ENCODE measurements at regions of chr1 and their contacts with region 1.

Region 1: GRCh38 chr1:32072622-32073298 is at the start of gene TMEM39B:
- DNase-seq: peak; percentile 95
- ATAC-seq: peak; percentile 87
- H3K4me3 ChIP-seq: peak within 1 kb of the TSS; percentile 84
- H3K27ac ChIP-seq: peak within 1 kb of the TSS; percentile 95
- H3K4me1 ChIP-seq: peaks cover 10% of the 10 kb centered on the region
- H3K27me3 ChIP-seq: no peaks in the 10 kb centered on the region
- CTCF ChIP-seq: no peak
- POLR2A ChIP-seq: peak; percentile 52
- RAD21 ChIP-seq: no peak
- total RNA-seq, gene TMEM39B: 4.4 and 6.5 TPM in 2 replicates

Region 2: GRCh38 chr1:31637915-31638673 is 434.7 kb before region 1 on chr1:
- CTCF ChIA-PET with region 1: no interaction called
- POLR2A ChIA-PET with region 1: interaction called, 12 read pairs
- dilution Hi-C with region 1: no loop called
- in situ Hi-C with region 1: no loop called
- intact Hi-C with region 1: no loop called
- DNase-seq: no peak
- ATAC-seq: no peak
- H3K4me3 ChIP-seq: no peak overlapping the region
- H3K27ac ChIP-seq: no peak overlapping the region
- H3K4me1 ChIP-seq: peaks cover 12% of the 10 kb centered on the region; the same call in 1 of the 2 replicates
- H3K27me3 ChIP-seq: no peaks in the 10 kb centered on the region
- CTCF ChIP-seq: no peak
- POLR2A ChIP-seq: no peak
- RAD21 ChIP-seq: no peak

Region 3: DNA sequence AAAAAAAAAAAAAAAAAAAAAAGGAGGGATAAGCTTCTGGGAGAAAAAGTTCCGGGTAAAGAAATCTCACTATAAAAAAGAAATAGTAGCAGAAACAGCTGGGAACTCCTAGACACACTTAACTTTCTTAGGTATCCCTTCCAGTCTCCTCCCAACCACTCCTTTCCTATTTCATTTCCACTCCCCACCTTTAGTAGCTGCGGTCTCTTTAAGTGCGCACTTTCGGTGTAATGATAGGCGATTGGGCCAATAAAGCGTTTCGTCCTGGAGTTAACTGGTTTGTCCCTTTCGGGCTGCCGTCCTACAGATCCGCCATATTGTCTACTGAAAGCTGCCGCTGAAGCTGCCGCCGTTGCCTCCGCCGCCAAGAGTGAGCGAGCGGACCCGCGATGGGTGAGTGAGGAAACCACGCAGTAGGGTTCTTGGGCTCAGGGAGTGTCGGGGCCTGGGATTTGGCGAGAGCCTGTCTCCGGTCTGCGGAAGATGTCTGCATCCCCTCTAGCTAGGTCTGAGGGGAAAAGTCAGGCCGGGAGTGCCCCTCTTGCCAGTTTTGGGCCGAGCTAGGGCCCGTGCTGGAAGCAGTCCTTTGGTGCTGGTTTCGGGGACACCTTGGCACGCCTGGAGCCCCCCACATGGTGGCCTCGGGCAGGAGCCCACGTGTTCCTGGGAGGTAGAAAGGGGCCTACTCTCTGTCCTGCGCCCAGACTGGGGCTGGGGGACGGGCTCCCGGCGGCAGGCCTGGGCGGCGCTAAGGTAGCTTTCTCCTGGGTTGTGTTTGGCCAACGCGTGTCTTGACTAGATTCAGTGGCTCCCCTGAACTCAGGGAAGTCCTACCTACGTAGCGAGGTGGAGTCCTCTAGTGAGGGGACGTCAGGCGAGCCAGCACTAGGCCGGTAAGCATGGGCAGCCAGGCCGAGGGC is 35.2 kb after region 1 on chr1 and contains the start of gene KPNA6:
- CTCF ChIA-PET with region 1: interaction called, 3 read pairs
- POLR2A ChIA-PET with region 1: interaction called, 4 read pairs
- dilution Hi-C with region 1: no loop called
- in situ Hi-C with region 1: no loop called
- intact Hi-C with region 1: loop called (anchors 5 kb)
- DNase-seq: peak; percentile 98
- ATAC-seq: peak; percentile 87
- H3K4me3 ChIP-seq: peak within 1 kb of the TSS; percentile 93
- H3K27ac ChIP-seq: peak within 1 kb of the TSS; percentile 95
- H3K4me1 ChIP-seq: no peaks in the 10 kb centered on the region
- H3K27me3 ChIP-seq: no peaks in the 10 kb centered on the region
- CTCF ChIP-seq: no peak
- POLR2A ChIP-seq: peak; percentile 64
- RAD21 ChIP-seq: no peak
- total RNA-seq, gene KPNA6: 50.7 and 53.6 TPM in 2 replicates